ENCODE measurements at regions of chr7 and their contacts with region 1.

Region 1: DNA sequence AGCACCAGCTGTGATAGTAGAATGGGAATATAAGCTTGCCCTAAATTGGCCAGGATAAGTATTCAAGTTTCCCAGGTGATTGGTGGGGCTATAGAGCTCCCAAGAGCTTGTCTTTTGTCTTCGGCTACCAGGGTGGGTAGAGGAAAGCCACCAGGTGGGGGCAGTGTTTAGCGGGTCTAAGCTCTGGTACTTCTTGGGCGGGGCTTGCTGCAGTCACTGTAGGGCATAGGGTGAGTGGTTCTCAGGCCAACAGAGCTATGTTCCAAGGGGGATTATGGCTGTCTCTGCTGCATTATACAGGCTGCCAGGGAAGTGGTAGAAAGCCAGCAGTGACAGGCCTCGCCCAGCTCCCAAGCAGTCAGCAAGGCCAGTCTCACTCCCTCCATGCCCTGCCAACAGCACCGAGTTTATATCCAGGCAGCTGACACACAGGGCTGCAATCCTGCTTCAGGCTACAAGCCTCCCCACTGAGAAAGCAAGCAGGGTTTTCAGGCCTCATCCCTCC is 110.7 kb downstream of the ZNF467 start:
- DNase-seq: peak; percentile 73
- H3K4me3 Mint-ChIP-seq: no peak overlapping the region
- H3K27ac Mint-ChIP-seq: no peak overlapping the region
- H3K4me1 Mint-ChIP-seq: no peaks in the 10 kb centered on the region
- H3K27me3 Mint-ChIP-seq: peaks cover 60% of the 10 kb centered on the region

Region 2: DNA sequence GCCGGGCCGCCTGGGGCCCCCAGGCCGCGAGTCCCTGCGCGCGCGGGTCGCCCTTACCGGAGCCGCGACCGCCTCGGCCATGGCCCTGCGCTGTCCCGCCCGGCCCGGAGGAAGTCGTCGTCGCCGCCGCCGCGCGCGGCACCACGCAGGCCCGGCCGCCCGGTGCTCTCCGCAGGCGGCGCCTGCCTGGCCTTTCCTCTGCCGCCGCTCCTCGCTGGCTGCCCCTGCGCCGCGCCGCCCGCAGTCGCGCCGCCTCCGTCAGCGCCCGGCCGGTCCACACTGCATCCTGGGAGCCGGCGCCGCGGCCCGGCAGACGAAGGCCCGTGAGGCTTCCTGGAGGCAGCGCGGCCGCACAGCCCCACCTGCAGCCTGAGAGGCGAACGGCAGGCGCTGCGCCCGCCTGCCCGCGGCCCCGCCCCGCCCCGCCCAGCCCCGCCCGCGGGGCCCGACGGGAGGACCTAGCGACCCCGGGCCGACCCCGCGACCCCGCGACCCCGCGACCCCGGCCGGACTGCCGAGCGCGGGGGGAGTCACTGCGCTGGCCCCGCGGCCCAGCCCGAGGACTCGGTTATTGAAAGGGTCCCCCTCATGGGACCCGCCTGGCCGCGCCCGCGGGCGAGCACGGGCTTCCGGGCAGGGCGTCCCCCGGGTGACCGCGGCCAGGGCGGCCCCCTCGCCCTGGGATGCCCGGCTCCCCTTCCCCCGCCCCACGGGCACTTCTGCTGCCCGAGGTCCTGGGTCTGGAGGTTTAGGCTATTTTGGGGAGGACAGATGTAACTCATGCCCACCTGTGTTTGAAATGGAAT is 165.0 kb before region 1 on chr7 and contains the start of gene ZNF746:
- CTCF ChIA-PET with region 1: no interaction called
- POLR2A ChIA-PET with region 1: no interaction called
- DNase-seq: peak; percentile 82
- H3K4me3 Mint-ChIP-seq: peak within 1 kb of the TSS; percentile 97
- H3K27ac Mint-ChIP-seq: peak within 1 kb of the TSS; percentile 97
- H3K4me1 Mint-ChIP-seq: peaks cover 46% of the 10 kb centered on the region
- H3K27me3 Mint-ChIP-seq: peaks cover 3% of the 10 kb centered on the region
- total RNA-seq, gene ZNF746: 21.0 to 21.9 TPM

Region 3: DNA sequence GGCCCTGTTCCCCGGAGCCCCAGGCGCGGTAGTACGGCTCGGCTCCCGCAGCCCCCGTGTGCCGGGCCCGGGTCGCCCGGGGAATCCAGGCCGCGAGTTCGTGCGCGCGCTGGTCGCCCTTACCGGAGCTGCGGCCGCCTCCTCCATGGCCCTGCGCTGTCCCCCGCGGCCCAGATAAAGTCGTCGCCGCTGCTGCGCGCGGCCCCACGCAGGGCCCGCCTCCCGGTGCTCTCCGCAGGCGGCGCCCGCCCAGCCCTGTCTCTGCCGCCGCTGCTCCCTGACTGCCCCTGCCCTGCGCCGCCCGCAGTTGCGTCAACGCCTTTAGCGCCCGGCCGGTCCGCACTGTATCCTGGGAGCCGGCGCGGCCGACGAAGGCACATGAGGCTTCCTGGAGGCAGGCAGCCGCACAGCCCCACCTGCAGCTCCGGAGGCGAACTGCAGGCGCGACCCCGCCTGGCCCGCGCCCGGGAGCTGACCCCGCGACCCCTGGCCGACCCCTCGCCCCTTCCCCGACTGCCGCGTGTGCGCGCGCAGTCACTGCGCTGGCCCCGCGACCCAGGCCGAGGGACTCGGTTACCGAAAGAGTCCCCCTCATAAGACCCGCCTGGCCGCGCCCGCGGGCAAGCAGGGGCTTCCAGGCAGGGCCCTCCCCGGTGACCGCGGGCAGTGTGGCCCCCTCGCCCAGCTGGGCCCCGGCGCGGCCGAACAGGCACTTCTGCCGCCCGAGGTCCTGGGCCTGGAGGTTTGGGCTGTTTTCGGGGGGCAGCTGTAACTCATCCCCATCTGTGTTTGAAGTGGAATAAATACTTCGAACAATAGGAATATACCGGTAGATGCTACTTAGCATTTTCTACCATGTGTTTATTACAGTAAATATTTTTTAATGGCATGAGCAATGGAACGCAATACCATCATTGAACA is 38.0 kb before region 1 on chr7:
- CTCF ChIA-PET with region 1: interaction called, 10 read pairs
- POLR2A ChIA-PET with region 1: no interaction called
- DNase-seq: peak; percentile 91
- H3K4me3 Mint-ChIP-seq: peak overlapping the region; percentile 90
- H3K27ac Mint-ChIP-seq: peak overlapping the region; percentile 93
- H3K4me1 Mint-ChIP-seq: peaks cover 40% of the 10 kb centered on the region
- H3K27me3 Mint-ChIP-seq: peaks cover 13% of the 10 kb centered on the region

Region 4: DNA sequence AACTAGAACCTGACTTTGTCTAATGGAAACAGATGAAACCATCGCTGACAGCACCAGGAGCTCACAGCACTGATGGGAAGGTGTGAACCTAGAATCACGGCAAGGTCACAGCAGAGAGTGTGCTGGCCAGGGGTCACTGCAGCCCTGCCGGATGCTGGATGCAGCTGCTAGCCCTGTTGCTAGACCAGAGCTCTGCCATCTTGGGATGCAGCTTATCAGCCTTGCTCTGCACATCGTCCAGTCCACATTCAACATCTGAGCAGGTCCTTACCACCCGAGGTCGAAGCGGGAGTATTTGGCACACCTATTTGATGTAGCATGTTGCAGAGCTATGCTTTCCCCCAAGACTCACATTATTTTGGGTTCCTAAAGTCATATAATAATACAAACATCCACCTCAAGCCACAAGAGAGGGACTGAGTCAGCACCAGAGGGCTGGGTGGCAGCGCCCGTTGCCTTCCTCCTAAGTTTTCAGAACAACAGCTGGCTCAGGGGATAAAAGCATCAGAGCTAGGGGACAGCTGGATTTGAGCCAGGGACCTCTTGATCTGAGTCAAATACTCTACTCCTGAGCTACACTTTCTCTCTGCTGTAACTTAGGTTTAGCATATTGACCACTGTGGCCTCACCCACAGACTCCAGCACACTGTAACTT is 24.6 kb before region 1 on chr7:
- CTCF ChIA-PET with region 1: no interaction called
- POLR2A ChIA-PET with region 1: no interaction called
- DNase-seq: no peak
- H3K4me3 Mint-ChIP-seq: no peak overlapping the region
- H3K27ac Mint-ChIP-seq: no peak overlapping the region
- H3K4me1 Mint-ChIP-seq: no peaks in the 10 kb centered on the region
- H3K27me3 Mint-ChIP-seq: peaks cover 10% of the 10 kb centered on the region

Region 5: GRCh38 chr7:149742075-149742701 is 79.5 kb after region 1 on chr7:
- CTCF ChIA-PET with region 1: interaction called, 12 read pairs
- POLR2A ChIA-PET with region 1: no interaction called
- DNase-seq: peak; percentile 62
- H3K4me3 Mint-ChIP-seq: peak overlapping the region; percentile 41
- H3K27ac Mint-ChIP-seq: no peak overlapping the region
- H3K4me1 Mint-ChIP-seq: peaks cover 11% of the 10 kb centered on the region
- H3K27me3 Mint-ChIP-seq: peaks cover 51% of the 10 kb centered on the region

Region 6: GRCh38 chr7:149799397-149800171 is 136.9 kb after region 1 on chr7:
- CTCF ChIA-PET with region 1: interaction called, 12 read pairs
- POLR2A ChIA-PET with region 1: no interaction called
- DNase-seq: peak; percentile 61
- H3K4me3 Mint-ChIP-seq: no peak overlapping the region
- H3K27ac Mint-ChIP-seq: no peak overlapping the region
- H3K4me1 Mint-ChIP-seq: no peaks in the 10 kb centered on the region
- H3K27me3 Mint-ChIP-seq: no peaks in the 10 kb centered on the region